Naive thymus-derived CD8-positive, alpha-beta T cell (primary cell): ENCODE measurements at regions of chr4 and their contacts with region 1.

Region 1: DNA sequence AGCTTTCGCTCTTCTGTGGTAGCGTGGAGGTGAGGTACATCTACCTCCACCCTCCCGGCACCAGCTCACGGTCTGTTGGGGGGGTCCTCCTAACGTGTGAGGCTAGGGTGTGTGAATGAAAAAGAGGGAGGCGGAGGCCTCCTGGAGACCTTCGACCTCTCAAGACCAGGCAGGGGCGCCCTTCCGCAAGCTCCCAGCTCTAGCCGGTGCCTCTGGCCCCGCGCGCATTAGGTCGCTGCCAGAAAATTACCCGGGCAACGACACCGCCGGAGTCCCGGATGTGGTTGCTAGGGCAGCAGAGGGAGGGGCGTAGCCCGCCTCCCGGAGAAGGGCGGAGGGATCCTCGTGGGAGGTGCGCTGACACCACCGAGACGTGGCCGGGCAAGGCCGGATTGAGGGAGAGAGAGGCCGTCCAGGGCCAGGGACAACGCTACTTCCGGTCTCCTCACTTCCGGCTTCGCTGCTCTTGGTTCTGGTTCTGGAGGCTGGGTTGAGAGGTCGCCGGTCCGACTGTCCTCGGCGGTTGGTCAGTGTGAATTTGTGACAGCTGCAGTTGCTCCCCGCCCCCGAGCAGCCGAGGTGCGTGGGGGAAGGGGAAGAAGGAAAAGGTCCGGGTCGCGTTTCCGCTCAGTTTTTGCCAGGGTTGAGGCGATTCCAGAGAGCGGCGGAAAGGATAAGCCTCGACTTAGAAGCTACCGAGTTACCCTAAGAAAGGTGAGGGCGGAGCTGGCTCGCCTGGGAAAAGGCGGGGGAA is at the starts of genes ARFIP1 and TIGD4:
- DNase-seq: peak; percentile 82 to 96 (median 93)
- ATAC-seq: peak; percentile 83 to 85
- H3K4me3 Mint-ChIP-seq: peak within 1 kb of the TSS; percentile 92 to 100 (median 99)
- H3K27ac Mint-ChIP-seq: peak within 1 kb of the TSS; percentile 87 to 99 (median 97)
- H3K4me1 Mint-ChIP-seq: peaks cover 18 to 56% (median 48%) of the 10 kb centered on the region in 4 donors
- H3K27me3 Mint-ChIP-seq: peaks cover 0 to 12% (median 3%) of the 10 kb centered on the region in 5 donors
- polyA plus RNA-seq, gene ARFIP1: 12.2 to 21.3 (median 17.9) TPM
- polyA plus RNA-seq, gene TIGD4: 0.12 TPM in 1 of 3 donors, not detected in the others

Region 2: DNA sequence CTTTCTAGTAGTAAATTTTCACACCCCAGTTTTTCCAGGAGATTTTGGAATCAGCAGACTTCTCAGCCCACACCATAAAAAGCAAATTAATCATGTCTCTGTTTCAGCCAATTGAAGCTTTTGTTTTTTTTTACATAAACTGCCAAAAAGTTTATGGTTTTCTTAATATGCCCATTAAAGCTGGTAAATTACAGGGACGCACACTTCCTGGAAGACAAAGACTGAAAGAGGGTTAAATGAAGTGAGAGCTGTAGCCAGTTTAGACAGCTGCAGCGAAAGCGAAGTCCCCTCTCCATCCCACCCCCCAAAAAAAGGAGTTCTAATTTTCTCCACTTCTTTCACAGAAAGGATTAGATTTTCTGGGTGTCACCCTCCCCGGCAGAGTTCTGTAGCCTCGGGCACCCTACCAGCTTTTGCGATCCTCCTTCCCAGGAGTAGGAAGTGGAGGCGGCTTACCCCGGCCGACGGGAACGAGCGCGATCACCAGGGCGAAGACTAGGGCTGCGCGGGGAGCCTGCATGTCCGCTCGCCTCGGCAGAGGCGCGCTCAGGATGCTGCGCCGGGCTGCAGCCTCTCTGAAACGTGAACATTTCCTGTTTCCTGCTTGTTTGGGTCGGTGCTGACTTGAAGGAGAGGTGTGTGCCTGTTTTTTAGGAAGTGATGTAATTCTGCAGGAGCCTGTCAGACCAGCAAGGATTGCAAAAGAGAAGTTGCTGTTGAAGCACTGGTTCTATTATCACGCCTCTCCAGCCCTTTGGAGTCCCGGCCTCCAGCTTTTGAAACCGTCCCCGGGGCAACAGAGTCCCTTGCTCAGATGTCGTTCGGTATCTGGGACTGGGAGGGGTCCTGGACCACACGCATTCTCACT is 100.0 kb before region 1 on chr4 and contains the start of gene TMEM154:
- POLR2A ChIA-PET with region 1: interaction called, 13 read pairs
- DNase-seq: peak; percentile 47 to 85 (median 66)
- ATAC-seq: peak; percentile 98 to 99
- H3K4me3 Mint-ChIP-seq: peak within 1 kb of the TSS; percentile 89 to 97 (median 94)
- H3K27ac Mint-ChIP-seq: peak within 1 kb of the TSS; percentile 90 to 98 (median 95)
- H3K4me1 Mint-ChIP-seq: peaks cover 17 to 59% (median 41%) of the 10 kb centered on the region in 4 donors
- H3K27me3 Mint-ChIP-seq: no peaks in the 10 kb centered on the region
- polyA plus RNA-seq, gene TMEM154: 24.7 to 30.8 (median 28.4) TPM

Region 3: GRCh38 chr4:152763796-152764195 is 15.9 kb before region 1 on chr4:
- POLR2A ChIA-PET with region 1: no interaction called
- DNase-seq: no peak
- ATAC-seq: no peak
- H3K4me3 Mint-ChIP-seq: no peak overlapping the region
- H3K27ac Mint-ChIP-seq: no peak overlapping the region
- H3K4me1 Mint-ChIP-seq: no peaks in the 10 kb centered on the region
- H3K27me3 Mint-ChIP-seq: peaks cover 0 to 8% (median 6%) of the 10 kb centered on the region in 5 donors

Region 4: GRCh38 chr4:152795891-152796290 is 16.2 kb after region 1 on chr4:
- POLR2A ChIA-PET with region 1: no interaction called
- DNase-seq: no peak
- ATAC-seq: no peak
- H3K4me3 Mint-ChIP-seq: no peak overlapping the region
- H3K27ac Mint-ChIP-seq: no peak overlapping the region
- H3K4me1 Mint-ChIP-seq: peaks cover 11 to 20% (median 14%) of the 10 kb centered on the region in 4 donors
- H3K27me3 Mint-ChIP-seq: no peaks in the 10 kb centered on the region